ENCODE measurements at regions of chr13 and their contacts with region 1.

Region 1: GRCh38 chr13:28429685-28430290 is 65.1 kb downstream of the FLT1 start:
- DNase-seq: peak; percentile 79
- ATAC-seq: peak; percentile 89
- H3K4me3 ChIP-seq: peak overlapping the region; percentile 44 to 78 (median 64)
- H3K4me3 Mint-ChIP-seq: peak overlapping the region; percentile 89
- H3K27ac ChIP-seq: peak overlapping the region; percentile 88 to 93
- H3K27ac Mint-ChIP-seq: peak overlapping the region; percentile 98
- H3K4me1 ChIP-seq: peaks cover 27 to 28% of the 10 kb centered on the region in 2 donors
- H3K4me1 Mint-ChIP-seq: peaks cover 38% of the 10 kb centered on the region
- H3K27me3 ChIP-seq: no peaks in the 10 kb centered on the region
- H3K27me3 Mint-ChIP-seq: peaks cover under 1% of the 10 kb centered on the region
- CTCF ChIP-seq: no peak

Region 2: GRCh38 chr13:28636674-28637317 is 207.0 kb after region 1 on chr13:
- CTCF ChIA-PET with region 1: no interaction called
- POLR2A ChIA-PET with region 1: no interaction called
- intact Hi-C with region 1: loop called (anchors 5 kb)
- DNase-seq: peak; percentile 86
- ATAC-seq: peak; percentile 81
- H3K4me3 ChIP-seq: peak overlapping the region in 1 of 5 experiments; percentile 24
- H3K4me3 Mint-ChIP-seq: peak overlapping the region; percentile 57
- H3K27ac ChIP-seq: peak overlapping the region; percentile 25 to 72
- H3K27ac Mint-ChIP-seq: peak overlapping the region; percentile 51
- H3K4me1 ChIP-seq: peaks cover 36 to 42% of the 10 kb centered on the region in 2 donors
- H3K4me1 Mint-ChIP-seq: peaks cover 39% of the 10 kb centered on the region
- H3K27me3 ChIP-seq: no peaks in the 10 kb centered on the region
- H3K27me3 Mint-ChIP-seq: peaks cover 5% of the 10 kb centered on the region
- CTCF ChIP-seq: peak; percentile 73

Region 3: GRCh38 chr13:29730253-29730652 is 1300.5 kb after region 1 on chr13:
- CTCF ChIA-PET with region 1: no interaction called
- POLR2A ChIA-PET with region 1: no interaction called
- intact Hi-C with region 1: no loop called
- DNase-seq: no peak
- ATAC-seq: no peak
- H3K4me3 ChIP-seq: no peak overlapping the region
- H3K4me3 Mint-ChIP-seq: no peak overlapping the region
- H3K27ac ChIP-seq: no peak overlapping the region
- H3K27ac Mint-ChIP-seq: no peak overlapping the region
- H3K4me1 ChIP-seq: no peaks in the 10 kb centered on the region
- H3K4me1 Mint-ChIP-seq: no peaks in the 10 kb centered on the region
- H3K27me3 ChIP-seq: peaks cover 0 to 33% (median 6%) of the 10 kb centered on the region in 4 experiments
- H3K27me3 Mint-ChIP-seq: peaks cover 61% of the 10 kb centered on the region
- CTCF ChIP-seq: no peak

Measured in B cell (primary cell).